Activated CD4-positive, alpha-beta T cell treated with anti-CD3 and anti-CD28 coated beads for 36 hours (primary cell): ENCODE measurements at regions of chr6 and their contacts with region 1.

Region 1: DNA sequence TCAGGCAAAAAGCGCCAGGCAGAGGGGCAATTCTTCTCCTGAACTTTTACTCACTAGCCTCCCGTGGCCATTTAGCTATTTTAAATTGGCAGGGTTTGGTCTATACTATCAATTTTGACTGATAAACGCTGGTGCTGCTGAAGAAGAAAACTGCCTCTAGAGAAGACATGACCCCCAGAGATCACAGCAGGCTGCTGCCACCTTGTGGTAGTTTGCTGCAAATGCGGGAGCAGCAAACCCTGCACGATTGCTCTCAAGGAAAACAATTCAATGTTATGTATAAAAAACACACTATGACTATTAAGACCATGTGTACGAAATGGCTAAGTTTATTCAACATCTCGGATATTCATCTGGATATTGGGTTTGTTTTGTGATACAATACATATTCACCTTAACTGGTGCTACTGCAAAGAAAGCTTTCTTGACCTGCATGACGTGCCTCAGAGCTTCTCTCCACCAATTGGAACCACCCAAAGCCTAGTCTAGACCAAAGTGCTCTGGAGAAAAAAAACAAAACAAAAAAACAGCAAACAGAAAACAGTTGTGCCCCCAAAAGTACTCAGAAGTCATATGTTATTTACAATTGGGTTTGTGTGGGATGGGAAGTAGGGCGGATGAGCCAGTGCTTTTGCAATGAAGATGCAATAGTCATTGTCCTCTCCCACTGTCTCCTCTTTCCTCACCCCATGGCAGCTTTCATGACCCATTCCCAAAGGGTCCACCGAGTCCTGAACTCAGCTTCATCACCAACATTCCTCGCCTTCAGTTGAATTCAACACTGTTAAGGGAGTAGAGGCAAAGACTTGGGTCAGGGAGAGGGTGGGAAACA is 19.6 kb upstream of the IL17F start:
- DNase-seq: peak; percentile 84
- ATAC-seq: peak; percentile 84
- H3K4me3 Mint-ChIP-seq: no peak overlapping the region
- H3K27ac Mint-ChIP-seq: peak overlapping the region; percentile 42
- H3K4me1 Mint-ChIP-seq: peaks cover 12% of the 10 kb centered on the region
- H3K27me3 Mint-ChIP-seq: no peaks in the 10 kb centered on the region

Region 2: GRCh38 chr6:51855310-51856082 is 408.4 kb before region 1 on chr6:
- CTCF ChIA-PET with region 1: no interaction called
- POLR2A ChIA-PET with region 1: no interaction called
- intact Hi-C with region 1: loop called in 1 of 2 experiments (anchors 5 kb)
- DNase-seq: peak; percentile 18
- ATAC-seq: no peak
- H3K4me3 Mint-ChIP-seq: no peak overlapping the region
- H3K27ac Mint-ChIP-seq: no peak overlapping the region
- H3K4me1 Mint-ChIP-seq: no peaks in the 10 kb centered on the region
- H3K27me3 Mint-ChIP-seq: peaks cover 10% of the 10 kb centered on the region

Region 3: DNA sequence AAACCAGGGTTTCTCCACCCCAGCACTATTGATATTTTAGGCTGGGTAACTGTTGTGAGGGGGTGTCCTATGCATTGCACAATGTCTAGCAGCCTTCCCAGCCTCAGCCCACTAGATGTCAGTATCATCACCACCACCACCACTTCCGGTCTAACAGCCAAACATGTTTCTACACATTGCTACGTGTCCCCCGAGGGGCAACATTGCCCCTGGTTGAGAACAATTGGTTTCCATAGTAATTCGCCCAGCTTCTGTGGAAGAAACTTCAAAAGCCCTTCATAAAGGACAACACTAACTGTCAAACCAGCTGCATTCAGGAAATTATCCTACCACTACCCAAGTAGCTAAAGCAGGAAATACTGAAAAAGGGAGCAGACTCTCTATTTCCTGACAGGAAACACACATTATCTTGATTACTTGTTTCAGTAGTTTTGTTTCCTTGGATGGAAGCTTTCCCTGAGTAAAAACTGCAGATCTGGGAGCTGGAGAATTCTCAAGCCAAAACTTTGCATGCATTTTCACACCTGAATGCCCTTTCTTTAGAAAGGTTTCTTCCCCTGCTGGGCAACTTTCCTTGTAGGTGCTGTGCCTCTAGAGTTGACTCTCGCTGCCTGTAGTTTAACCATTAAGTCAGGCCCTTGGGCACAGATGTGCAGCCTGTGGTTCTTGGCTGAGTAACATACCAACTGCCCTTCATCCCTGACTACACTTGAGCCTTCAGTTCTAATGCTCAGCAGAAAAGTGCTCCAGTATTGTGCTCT is 200.2 kb before region 1 on chr6:
- CTCF ChIA-PET with region 1: interaction called, 12 read pairs
- POLR2A ChIA-PET with region 1: no interaction called
- intact Hi-C with region 1: loop called (anchors 2 to 10 kb)
- DNase-seq: peak; percentile 79
- ATAC-seq: peak; percentile 99
- H3K4me3 Mint-ChIP-seq: no peak overlapping the region
- H3K27ac Mint-ChIP-seq: peak overlapping the region; percentile 77
- H3K4me1 Mint-ChIP-seq: peaks cover 12% of the 10 kb centered on the region
- H3K27me3 Mint-ChIP-seq: peaks cover 3% of the 10 kb centered on the region

Region 4: GRCh38 chr6:52098634-52099185 is 165.2 kb before region 1 on chr6:
- CTCF ChIA-PET with region 1: interaction called, 11 read pairs
- POLR2A ChIA-PET with region 1: interaction called, 4 read pairs
- intact Hi-C with region 1: loop called (anchors 1 to 2 kb)
- DNase-seq: no peak
- ATAC-seq: peak; percentile 58
- H3K4me3 Mint-ChIP-seq: no peak overlapping the region
- H3K27ac Mint-ChIP-seq: no peak overlapping the region
- H3K4me1 Mint-ChIP-seq: peaks cover 2% of the 10 kb centered on the region
- H3K27me3 Mint-ChIP-seq: peaks cover 33% of the 10 kb centered on the region

Region 5: DNA sequence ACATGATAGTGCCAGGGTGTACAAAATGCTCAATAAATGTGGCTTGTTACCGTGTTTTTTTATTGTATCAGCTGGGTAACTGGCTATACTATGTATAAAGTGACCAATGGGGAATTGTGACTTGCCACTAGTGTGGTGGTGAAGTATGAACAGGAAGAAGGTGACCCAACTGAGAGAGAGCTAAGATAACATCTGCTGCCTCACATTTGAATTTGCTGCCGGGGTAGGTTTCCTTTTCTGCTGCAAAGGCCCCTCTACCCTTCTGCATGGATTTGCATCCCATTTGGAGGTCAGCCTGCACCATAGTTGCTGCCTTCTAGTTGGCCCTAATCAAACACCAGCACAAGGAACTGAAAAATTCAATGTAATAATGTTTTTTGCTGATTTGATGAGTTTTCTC is 53.7 kb before region 1 on chr6:
- CTCF ChIA-PET with region 1: interaction called, 8 read pairs
- POLR2A ChIA-PET with region 1: no interaction called
- intact Hi-C with region 1: loop called (anchors 2 kb)
- DNase-seq: no peak
- ATAC-seq: peak; percentile 14
- H3K4me3 Mint-ChIP-seq: no peak overlapping the region
- H3K27ac Mint-ChIP-seq: peak overlapping the region; percentile 44
- H3K4me1 Mint-ChIP-seq: peaks cover 22% of the 10 kb centered on the region
- H3K27me3 Mint-ChIP-seq: peaks cover 10% of the 10 kb centered on the region

Region 6: DNA sequence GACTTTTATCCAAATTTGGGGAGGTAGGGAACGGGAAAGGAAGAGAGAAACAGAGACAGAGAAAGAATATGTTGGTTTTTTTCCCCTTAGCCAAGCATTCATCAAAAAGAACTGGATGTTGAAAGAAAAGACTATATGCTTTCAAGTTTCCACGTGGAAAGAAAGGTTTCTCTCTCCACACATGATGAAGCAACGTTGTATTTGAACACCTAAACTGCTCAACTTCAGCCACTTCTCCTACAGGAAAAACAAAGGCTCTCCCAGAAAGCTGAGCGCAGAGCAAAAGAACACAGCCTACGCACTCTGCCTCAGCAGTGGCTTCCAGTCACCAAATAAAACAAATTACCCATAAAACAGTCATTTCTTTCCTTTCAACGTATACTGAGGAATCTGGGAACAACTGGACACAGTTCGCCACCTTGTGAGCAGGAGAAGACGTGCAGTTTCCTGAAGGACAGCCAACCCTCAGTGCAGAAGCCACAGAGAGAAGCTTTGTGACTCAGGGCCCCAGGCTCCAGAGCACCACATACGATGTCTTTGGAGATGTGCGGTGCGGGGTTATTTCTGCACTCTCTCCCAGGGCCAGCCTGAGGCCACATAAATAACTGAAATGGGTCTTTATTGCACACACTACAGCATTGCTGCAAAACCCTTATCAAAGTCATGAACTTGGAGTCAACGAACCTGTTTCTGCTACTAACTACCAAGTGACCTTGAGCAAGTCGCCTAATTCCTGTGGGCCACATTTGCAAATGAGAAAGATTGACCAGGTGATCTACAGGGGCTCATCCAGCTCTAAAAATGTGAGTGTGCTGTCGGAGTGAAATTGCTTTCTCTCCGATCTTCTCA is 29.7 kb before region 1 on chr6:
- CTCF ChIA-PET with region 1: interaction called, 19 read pairs
- POLR2A ChIA-PET with region 1: no interaction called
- intact Hi-C with region 1: no loop called
- DNase-seq: peak; percentile 74
- ATAC-seq: peak; percentile 83
- H3K4me3 Mint-ChIP-seq: no peak overlapping the region
- H3K27ac Mint-ChIP-seq: no peak overlapping the region
- H3K4me1 Mint-ChIP-seq: peaks cover 21% of the 10 kb centered on the region
- H3K27me3 Mint-ChIP-seq: peaks cover 29% of the 10 kb centered on the region

Region 7: DNA sequence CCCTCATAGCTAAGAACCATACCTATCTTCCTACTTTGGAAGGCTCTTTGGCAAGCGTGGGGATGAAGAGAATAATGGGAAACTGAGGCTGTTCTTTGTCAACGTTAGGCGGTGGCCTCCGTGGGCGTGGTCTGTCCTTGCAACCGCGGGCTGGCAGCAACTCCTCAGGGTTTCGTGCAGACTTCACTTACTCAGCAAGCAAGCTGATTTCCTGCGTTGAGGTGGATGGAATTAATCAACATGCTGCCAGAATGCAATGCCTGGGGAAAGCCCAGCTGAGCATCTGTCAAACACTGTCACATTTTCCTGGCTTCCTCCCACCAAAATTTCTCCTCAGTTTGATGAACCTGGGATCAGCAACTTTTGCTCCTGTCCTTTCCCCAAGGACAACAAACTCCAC is 10.4 kb before region 1 on chr6:
- CTCF ChIA-PET with region 1: interaction called, 46 read pairs
- POLR2A ChIA-PET with region 1: no interaction called
- intact Hi-C with region 1: no loop called
- DNase-seq: peak; percentile 76
- ATAC-seq: peak; percentile 53
- H3K4me3 Mint-ChIP-seq: no peak overlapping the region
- H3K27ac Mint-ChIP-seq: peak overlapping the region; percentile 72
- H3K4me1 Mint-ChIP-seq: peaks cover 48% of the 10 kb centered on the region
- H3K27me3 Mint-ChIP-seq: peaks cover 22% of the 10 kb centered on the region